Activated naive CD4-positive, alpha-beta T cell treated with anti-CD3 and anti-CD28 coated beads, Interleukin-2, amount 10 ng/mL, durations not matched to agents 7 days and 5 days (primary cell): ENCODE measurements at regions of chr15 and their contacts with region 1.

Region 1: DNA sequence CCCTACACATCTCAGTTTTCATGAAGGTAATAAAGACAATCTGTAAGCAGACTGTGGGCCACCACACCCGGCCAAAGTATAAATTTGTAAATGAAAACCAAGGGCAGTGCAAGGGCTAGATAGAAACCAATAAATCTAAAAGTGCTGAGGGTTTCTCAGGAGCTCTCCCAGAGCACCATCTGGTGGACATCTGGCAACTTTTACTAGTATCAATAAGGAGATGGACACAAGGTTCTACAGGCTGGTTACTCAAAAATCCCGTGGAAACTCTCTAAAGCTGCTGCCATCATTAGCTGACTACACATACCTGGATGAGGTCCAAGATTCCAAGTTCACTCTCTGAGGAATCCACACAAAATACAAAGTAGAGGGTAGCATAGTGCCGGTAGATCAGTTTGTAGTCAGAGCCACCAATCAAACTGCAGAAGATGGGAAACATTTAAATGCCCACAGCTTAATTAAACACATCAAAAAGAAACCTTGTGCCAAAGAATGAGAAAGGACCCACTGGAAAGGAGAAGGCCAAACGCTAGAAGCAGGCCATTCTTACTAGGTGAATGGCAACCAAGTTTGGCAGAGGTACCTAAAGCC is 5.5 kb downstream of the AP3S2 start:
- DNase-seq: no peak
- H3K4me3 Mint-ChIP-seq: no peak overlapping the region
- H3K27ac Mint-ChIP-seq: no peak overlapping the region
- H3K4me1 Mint-ChIP-seq: peaks cover 36% of the 10 kb centered on the region
- H3K27me3 Mint-ChIP-seq: no peaks in the 10 kb centered on the region

Region 2: GRCh38 chr15:89714775-89715174 is 173.5 kb before region 1 on chr15:
- CTCF ChIA-PET with region 1: no interaction called
- DNase-seq: no peak
- H3K4me3 Mint-ChIP-seq: no peak overlapping the region
- H3K27ac Mint-ChIP-seq: no peak overlapping the region
- H3K4me1 Mint-ChIP-seq: no peaks in the 10 kb centered on the region
- H3K27me3 Mint-ChIP-seq: peaks cover 10% of the 10 kb centered on the region

Region 3: GRCh38 chr15:89740137-89740536 is 148.2 kb before region 1 on chr15:
- CTCF ChIA-PET with region 1: interaction called, 15 read pairs
- DNase-seq: peak; percentile 70
- H3K4me3 Mint-ChIP-seq: no peak overlapping the region
- H3K27ac Mint-ChIP-seq: no peak overlapping the region
- H3K4me1 Mint-ChIP-seq: peaks cover 2% of the 10 kb centered on the region
- H3K27me3 Mint-ChIP-seq: peaks cover 42% of the 10 kb centered on the region

Region 4: GRCh38 chr15:89760303-89761008 is 127.9 kb before region 1 on chr15:
- CTCF ChIA-PET with region 1: interaction called, 49 read pairs
- DNase-seq: peak; percentile 79
- H3K4me3 Mint-ChIP-seq: no peak overlapping the region
- H3K27ac Mint-ChIP-seq: no peak overlapping the region
- H3K4me1 Mint-ChIP-seq: no peaks in the 10 kb centered on the region
- H3K27me3 Mint-ChIP-seq: peaks cover 42% of the 10 kb centered on the region

Region 5: DNA sequence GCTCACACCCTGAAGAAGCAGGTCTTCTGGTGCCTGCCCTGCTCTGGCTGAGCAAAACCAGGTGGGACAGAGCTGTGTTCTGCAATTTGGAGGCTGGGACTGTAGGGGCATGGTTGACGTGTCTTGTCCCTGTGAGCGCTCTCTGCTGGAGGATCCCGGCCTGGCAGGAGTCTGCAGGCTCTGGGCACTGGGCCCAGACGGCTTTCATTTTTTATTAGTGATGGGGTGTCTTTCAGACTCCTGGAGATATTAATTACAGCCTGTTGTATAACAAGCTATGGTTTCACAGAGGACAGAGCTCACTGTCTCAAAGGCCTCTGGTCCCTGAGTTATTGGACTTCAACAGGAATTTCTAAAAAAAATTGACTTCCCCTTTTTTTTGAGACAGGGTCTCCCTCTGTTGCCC is 83.3 kb after region 1 on chr15:
- CTCF ChIA-PET with region 1: no interaction called
- DNase-seq: peak; percentile 67
- H3K4me3 Mint-ChIP-seq: no peak overlapping the region
- H3K27ac Mint-ChIP-seq: no peak overlapping the region
- H3K4me1 Mint-ChIP-seq: no peaks in the 10 kb centered on the region
- H3K27me3 Mint-ChIP-seq: peaks cover 49% of the 10 kb centered on the region